HEK293 (cell line): ENCODE measurements at regions of chrX and their contacts with region 1.

Region 1: DNA sequence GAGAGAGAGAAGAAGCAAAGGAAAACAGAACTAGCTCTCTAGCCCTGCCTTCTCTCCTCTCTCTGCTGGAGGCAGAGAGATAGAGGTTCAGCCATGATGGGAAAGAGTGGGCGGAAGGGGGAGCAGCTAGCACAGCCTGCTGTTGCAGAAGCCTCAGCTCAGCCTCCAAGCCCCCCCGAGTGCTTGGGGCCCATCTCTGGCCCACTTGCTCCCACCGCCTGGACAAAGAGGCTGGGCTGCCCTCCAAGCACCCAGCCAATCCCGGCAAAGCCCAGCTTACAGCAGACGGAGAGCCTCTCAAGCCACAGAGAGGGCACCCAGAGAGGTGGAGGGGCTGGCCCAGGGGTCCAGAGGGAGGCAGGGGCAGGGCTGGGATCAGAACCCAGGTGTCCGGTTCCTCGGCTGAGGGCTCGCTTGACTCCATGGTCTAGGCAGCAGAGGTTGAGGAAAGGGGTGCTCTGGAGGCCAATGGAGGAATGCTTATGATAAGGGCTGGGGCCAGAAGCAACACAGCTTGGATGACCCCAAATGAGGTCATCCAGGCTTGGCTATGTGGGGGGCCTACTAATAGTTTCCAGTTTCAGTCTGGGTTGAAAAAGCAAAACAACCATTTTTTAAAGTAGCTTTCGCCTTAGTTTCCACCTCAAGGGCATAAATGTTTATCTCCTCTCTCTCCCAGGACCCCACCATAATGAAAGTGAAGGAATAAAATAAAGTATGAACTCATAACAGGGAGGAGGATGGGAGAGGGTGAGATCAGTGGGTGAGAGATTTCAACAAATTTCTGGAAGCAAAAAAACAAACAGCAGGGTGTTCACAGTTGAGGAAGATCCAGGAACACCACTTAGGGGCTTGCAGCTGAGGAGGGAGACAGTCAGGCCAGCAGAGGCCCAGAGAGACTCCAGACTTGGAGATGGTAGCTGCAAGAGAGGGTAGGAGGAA is 24.9 kb upstream of the IQSEC2 start:
- H3K4me3 ChIP-seq: no peak overlapping the region
- H3K27ac ChIP-seq: no peak overlapping the region
- H3K4me1 ChIP-seq: no peaks in the 10 kb centered on the region
- CTCF ChIP-seq: no peak

Region 2: GRCh38 chrX:53294024-53294648 is 12.1 kb before region 1 on chrX:
- CTCF ChIA-PET with region 1: interaction called, 153 read pairs
- POLR2A ChIA-PET with region 1: interaction called, 6 read pairs
- H3K4me3 ChIP-seq: no peak overlapping the region
- H3K27ac ChIP-seq: no peak overlapping the region
- H3K4me1 ChIP-seq: no peaks in the 10 kb centered on the region
- CTCF ChIP-seq: peak; percentile 30; the same call in 1 of the 2 replicates